CD4-positive, alpha-beta memory T cell (primary cell): ENCODE measurements at regions of chr6 and their contacts with region 1.

Region 1: GRCh38 chr6:149431905-149432775 is 32.1 kb downstream of the SUMO4 start:
- DNase-seq: peak; percentile 75 to 83 (median 80)
- H3K4me3 ChIP-seq: peak overlapping the region in 1 of 2 donors; percentile 3
- H3K4me3 Mint-ChIP-seq: peak overlapping the region in 7 of 8 donors; percentile 72 to 84 (median 80)
- H3K27ac ChIP-seq: no peak overlapping the region
- H3K27ac Mint-ChIP-seq: peak overlapping the region in 6 of 7 donors; percentile 56 to 93 (median 76)
- H3K4me1 ChIP-seq: peaks cover 8% of the 10 kb centered on the region
- H3K4me1 Mint-ChIP-seq: peaks cover 4 to 9% (median 6%) of the 10 kb centered on the region in 4 donors
- H3K27me3 ChIP-seq: no peaks in the 10 kb centered on the region
- H3K27me3 Mint-ChIP-seq: no peaks in the 10 kb centered on the region

Region 2: GRCh38 chr6:148811459-148811858 is 620.7 kb before region 1 on chr6:
- CTCF ChIA-PET with region 1: no interaction called
- POLR2A ChIA-PET with region 1: no interaction called
- intact Hi-C with region 1: no loop called
- DNase-seq: no peak
- H3K4me3 ChIP-seq: no peak overlapping the region
- H3K4me3 Mint-ChIP-seq: no peak overlapping the region
- H3K27ac ChIP-seq: no peak overlapping the region
- H3K27ac Mint-ChIP-seq: no peak overlapping the region
- H3K4me1 ChIP-seq: no peaks in the 10 kb centered on the region
- H3K4me1 Mint-ChIP-seq: peaks cover 8 to 30% (median 18%) of the 10 kb centered on the region in 4 donors
- H3K27me3 ChIP-seq: no peaks in the 10 kb centered on the region
- H3K27me3 Mint-ChIP-seq: no peaks in the 10 kb centered on the region

Region 3: GRCh38 chr6:149043476-149044130 is 388.5 kb before region 1 on chr6:
- CTCF ChIA-PET with region 1: interaction called, 34 read pairs
- POLR2A ChIA-PET with region 1: interaction called, 3 read pairs
- intact Hi-C with region 1: no loop called
- DNase-seq: no peak
- H3K4me3 ChIP-seq: no peak overlapping the region
- H3K4me3 Mint-ChIP-seq: peak overlapping the region in 1 of 8 donors; percentile 22
- H3K27ac ChIP-seq: no peak overlapping the region
- H3K27ac Mint-ChIP-seq: peak overlapping the region in 1 of 7 donors; percentile 64
- H3K4me1 ChIP-seq: peaks cover 40% of the 10 kb centered on the region
- H3K4me1 Mint-ChIP-seq: peaks cover 34 to 47% (median 41%) of the 10 kb centered on the region in 4 donors
- H3K27me3 ChIP-seq: no peaks in the 10 kb centered on the region
- H3K27me3 Mint-ChIP-seq: no peaks in the 10 kb centered on the region

Region 4: GRCh38 chr6:149075616-149076364 is 356.4 kb before region 1 on chr6:
- CTCF ChIA-PET with region 1: interaction called, 41 read pairs
- POLR2A ChIA-PET with region 1: interaction called, 6 read pairs
- intact Hi-C with region 1: no loop called
- DNase-seq: peak in 1 of 5 donors; percentile 27
- H3K4me3 ChIP-seq: no peak overlapping the region
- H3K4me3 Mint-ChIP-seq: peak overlapping the region in 6 of 8 donors; percentile 19 to 49 (median 42)
- H3K27ac ChIP-seq: no peak overlapping the region
- H3K27ac Mint-ChIP-seq: peak overlapping the region; percentile 41 to 89 (median 76)
- H3K4me1 ChIP-seq: peaks cover 15% of the 10 kb centered on the region
- H3K4me1 Mint-ChIP-seq: peaks cover 15 to 33% (median 25%) of the 10 kb centered on the region in 4 donors
- H3K27me3 ChIP-seq: no peaks in the 10 kb centered on the region
- H3K27me3 Mint-ChIP-seq: no peaks in the 10 kb centered on the region

Region 5: GRCh38 chr6:149190224-149190831 is 241.8 kb before region 1 on chr6:
- CTCF ChIA-PET with region 1: interaction called, 19 read pairs
- POLR2A ChIA-PET with region 1: no interaction called
- intact Hi-C with region 1: loop called (anchors 1 kb)
- DNase-seq: peak; percentile 23 to 48 (median 32)
- H3K4me3 ChIP-seq: no peak overlapping the region
- H3K4me3 Mint-ChIP-seq: no peak overlapping the region
- H3K27ac ChIP-seq: no peak overlapping the region
- H3K27ac Mint-ChIP-seq: peak overlapping the region in 4 of 7 donors; percentile 14 to 77 (median 36)
- H3K4me1 ChIP-seq: peaks cover 16% of the 10 kb centered on the region
- H3K4me1 Mint-ChIP-seq: peaks cover 20 to 33% (median 24%) of the 10 kb centered on the region in 4 donors
- H3K27me3 ChIP-seq: no peaks in the 10 kb centered on the region
- H3K27me3 Mint-ChIP-seq: no peaks in the 10 kb centered on the region

Region 6: GRCh38 chr6:149414009-149414408 is 18.1 kb before region 1 on chr6:
- CTCF ChIA-PET with region 1: interaction called, 38 read pairs
- POLR2A ChIA-PET with region 1: interaction called, 4 read pairs
- intact Hi-C with region 1: no loop called
- DNase-seq: no peak
- H3K4me3 ChIP-seq: no peak overlapping the region
- H3K4me3 Mint-ChIP-seq: no peak overlapping the region
- H3K27ac ChIP-seq: no peak overlapping the region
- H3K27ac Mint-ChIP-seq: peak overlapping the region in 4 of 7 donors; percentile 8 to 75 (median 48)
- H3K4me1 ChIP-seq: no peaks in the 10 kb centered on the region
- H3K4me1 Mint-ChIP-seq: peaks cover 0 to 10% (median 8%) of the 10 kb centered on the region in 4 donors
- H3K27me3 ChIP-seq: no peaks in the 10 kb centered on the region
- H3K27me3 Mint-ChIP-seq: no peaks in the 10 kb centered on the region

Region 7: GRCh38 chr6:149488815-149489214 is 56.7 kb after region 1 on chr6:
- CTCF ChIA-PET with region 1: no interaction called
- POLR2A ChIA-PET with region 1: no interaction called
- intact Hi-C with region 1: no loop called
- DNase-seq: peak in 1 of 5 donors; percentile 49
- H3K4me3 ChIP-seq: no peak overlapping the region
- H3K4me3 Mint-ChIP-seq: no peak overlapping the region
- H3K27ac ChIP-seq: peak overlapping the region; percentile 4
- H3K27ac Mint-ChIP-seq: peak overlapping the region; percentile 15 to 92 (median 77)
- H3K4me1 ChIP-seq: peaks cover 30% of the 10 kb centered on the region
- H3K4me1 Mint-ChIP-seq: peaks cover 23 to 53% (median 40%) of the 10 kb centered on the region in 4 donors
- H3K27me3 ChIP-seq: no peaks in the 10 kb centered on the region
- H3K27me3 Mint-ChIP-seq: no peaks in the 10 kb centered on the region

Region 8: DNA sequence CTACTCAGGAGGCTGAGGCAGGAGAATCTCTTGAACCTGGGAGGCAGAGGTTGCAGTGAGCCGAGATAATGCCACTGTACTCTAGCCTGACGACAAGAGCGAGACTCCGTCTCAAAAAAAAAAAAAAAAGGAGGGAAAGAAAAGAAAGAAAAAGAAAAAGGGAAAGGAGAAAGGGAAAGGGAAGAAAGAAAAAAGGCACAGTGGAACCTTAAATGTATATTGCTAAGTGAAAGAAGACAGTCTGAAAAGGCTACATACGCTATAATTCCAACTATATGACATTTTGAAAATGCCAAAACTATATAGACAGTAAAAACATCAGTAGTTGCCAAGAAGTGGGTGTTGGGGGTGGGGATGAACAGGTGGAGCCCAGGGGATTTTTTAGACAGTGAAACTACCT is 97.5 kb after region 1 on chr6:
- CTCF ChIA-PET with region 1: interaction called, 11 read pairs
- POLR2A ChIA-PET with region 1: no interaction called
- intact Hi-C with region 1: no loop called
- DNase-seq: no peak
- H3K4me3 ChIP-seq: no peak overlapping the region
- H3K4me3 Mint-ChIP-seq: no peak overlapping the region
- H3K27ac ChIP-seq: no peak overlapping the region
- H3K27ac Mint-ChIP-seq: peak overlapping the region in 3 of 7 donors; percentile 11 to 59 (median 43)
- H3K4me1 ChIP-seq: no peaks in the 10 kb centered on the region
- H3K4me1 Mint-ChIP-seq: peaks cover 5 to 8% (median 6%) of the 10 kb centered on the region in 4 donors
- H3K27me3 ChIP-seq: no peaks in the 10 kb centered on the region
- H3K27me3 Mint-ChIP-seq: no peaks in the 10 kb centered on the region

Region 9: DNA sequence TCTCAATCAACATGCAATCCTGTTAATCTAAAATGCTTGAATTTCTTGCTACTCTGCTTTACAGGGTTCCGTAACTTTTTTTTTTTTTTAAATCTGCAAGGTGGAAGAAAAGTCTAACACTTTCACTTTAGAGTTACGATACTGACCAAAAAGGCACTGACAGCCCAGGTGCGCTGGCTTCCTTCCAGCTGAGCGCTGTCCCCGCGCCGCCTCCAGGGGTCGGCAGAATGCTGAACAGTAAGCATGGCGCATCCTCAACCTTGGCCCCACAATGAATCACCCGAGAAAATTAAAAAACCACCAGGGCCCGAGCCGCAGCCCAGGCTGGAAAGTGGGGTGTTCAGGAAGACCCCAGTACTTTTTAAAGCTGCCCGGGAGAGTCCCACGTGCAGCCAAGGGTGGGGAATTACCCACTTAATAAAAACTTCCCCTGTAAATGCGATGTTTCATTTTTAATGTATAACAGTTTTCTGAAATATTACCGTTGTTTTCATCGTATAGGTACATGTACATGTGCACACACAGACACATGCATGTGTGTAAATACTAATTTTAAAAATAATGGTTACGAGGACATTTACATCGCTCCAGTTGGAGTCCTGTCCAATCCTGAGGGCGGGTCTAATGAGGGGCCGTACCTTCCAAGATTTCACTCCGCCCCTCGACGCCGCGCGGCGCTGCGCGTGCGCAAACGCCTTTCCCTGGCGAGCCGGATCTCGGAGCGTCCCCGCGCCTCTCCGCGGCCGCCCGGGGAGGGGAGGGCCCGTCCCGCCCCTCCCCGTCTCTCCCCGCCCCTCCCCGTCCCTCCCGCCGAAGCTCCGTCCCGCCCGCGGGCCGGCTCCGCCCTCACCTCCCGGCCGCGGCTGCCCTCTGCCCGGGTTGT is 133.6 kb after region 1 on chr6 and contains the start of gene GINM1:
- CTCF ChIA-PET with region 1: no interaction called
- POLR2A ChIA-PET with region 1: no interaction called
- intact Hi-C with region 1: no loop called
- DNase-seq: peak; percentile 94 to 97 (median 96)
- H3K4me3 ChIP-seq: peak within 1 kb of the TSS; percentile 61 to 94
- H3K4me3 Mint-ChIP-seq: peak within 1 kb of the TSS; percentile 94 to 98 (median 96)
- H3K27ac ChIP-seq: peak within 1 kb of the TSS; percentile 93
- H3K27ac Mint-ChIP-seq: peak within 1 kb of the TSS; percentile 96 to 99 (median 98)
- H3K4me1 ChIP-seq: peaks cover 25% of the 10 kb centered on the region
- H3K4me1 Mint-ChIP-seq: peaks cover 8 to 29% (median 15%) of the 10 kb centered on the region in 4 donors
- H3K27me3 ChIP-seq: no peaks in the 10 kb centered on the region
- H3K27me3 Mint-ChIP-seq: peaks cover 0 to 1% of the 10 kb centered on the region in 2 donors
- total RNA-seq, gene GINM1: 17.1 to 18.5 TPM

Region 10: GRCh38 chr6:149586149-149586548 is 154.0 kb after region 1 on chr6:
- CTCF ChIA-PET with region 1: no interaction called
- POLR2A ChIA-PET with region 1: no interaction called
- intact Hi-C with region 1: no loop called
- DNase-seq: no peak
- H3K4me3 ChIP-seq: no peak overlapping the region
- H3K4me3 Mint-ChIP-seq: no peak overlapping the region
- H3K27ac ChIP-seq: no peak overlapping the region
- H3K27ac Mint-ChIP-seq: peak overlapping the region in 1 of 7 donors; percentile 51
- H3K4me1 ChIP-seq: no peaks in the 10 kb centered on the region
- H3K4me1 Mint-ChIP-seq: no peaks in the 10 kb centered on the region
- H3K27me3 ChIP-seq: no peaks in the 10 kb centered on the region
- H3K27me3 Mint-ChIP-seq: no peaks in the 10 kb centered on the region